ENCODE measurements at regions of chr7 and their contacts with region 1.

Region 1: GRCh38 chr7:9796241-9796640 is 1177.4 kb upstream of the PHF14 start:
- DNase-seq: no peak
- ATAC-seq: no peak
- H3K4me3 ChIP-seq: no peak overlapping the region
- H3K27ac ChIP-seq: no peak overlapping the region
- H3K4me1 ChIP-seq: no peaks in the 10 kb centered on the region
- H3K27me3 ChIP-seq: no peaks in the 10 kb centered on the region
- CTCF ChIP-seq: no peak
- EP300 ChIP-seq: no peak
- POLR2A ChIP-seq: no peak
- RAD21 ChIP-seq: no peak

Region 2: DNA sequence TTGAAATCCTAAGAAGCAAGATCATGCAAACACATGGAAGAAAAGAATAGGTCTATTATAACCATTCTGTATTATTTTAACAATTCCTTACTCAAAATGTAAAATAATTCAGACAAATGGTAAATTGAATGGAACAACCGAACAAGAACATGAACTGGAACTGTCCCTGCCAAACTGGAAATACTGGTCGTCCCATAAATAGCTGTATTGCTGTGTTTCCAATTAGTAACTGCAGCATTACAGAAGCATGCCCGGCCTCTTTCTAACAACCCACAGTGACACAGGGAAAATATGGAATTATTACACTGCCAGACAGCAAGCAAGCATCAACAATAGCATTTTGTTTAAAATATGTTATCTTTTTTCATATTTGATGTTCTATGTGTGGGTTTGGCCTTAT is 39.0 kb after region 1 on chr7:
- CTCF ChIA-PET with region 1: no interaction called
- POLR2A ChIA-PET with region 1: no interaction called
- RAD21 ChIA-PET with region 1: no interaction called
- SMC1A ChIA-PET with region 1: no interaction called
- in situ Hi-C with region 1: no loop called
- intact Hi-C with region 1: loop called (anchors 5 kb)
- DNase-seq: no peak
- ATAC-seq: no peak
- H3K4me3 ChIP-seq: no peak overlapping the region
- H3K27ac ChIP-seq: no peak overlapping the region
- H3K4me1 ChIP-seq: no peaks in the 10 kb centered on the region
- H3K27me3 ChIP-seq: no peaks in the 10 kb centered on the region
- CTCF ChIP-seq: no peak
- EP300 ChIP-seq: no peak
- POLR2A ChIP-seq: no peak
- RAD21 ChIP-seq: no peak